ENCODE measurements at regions of chr13 and their contacts with region 1.

Region 1: DNA sequence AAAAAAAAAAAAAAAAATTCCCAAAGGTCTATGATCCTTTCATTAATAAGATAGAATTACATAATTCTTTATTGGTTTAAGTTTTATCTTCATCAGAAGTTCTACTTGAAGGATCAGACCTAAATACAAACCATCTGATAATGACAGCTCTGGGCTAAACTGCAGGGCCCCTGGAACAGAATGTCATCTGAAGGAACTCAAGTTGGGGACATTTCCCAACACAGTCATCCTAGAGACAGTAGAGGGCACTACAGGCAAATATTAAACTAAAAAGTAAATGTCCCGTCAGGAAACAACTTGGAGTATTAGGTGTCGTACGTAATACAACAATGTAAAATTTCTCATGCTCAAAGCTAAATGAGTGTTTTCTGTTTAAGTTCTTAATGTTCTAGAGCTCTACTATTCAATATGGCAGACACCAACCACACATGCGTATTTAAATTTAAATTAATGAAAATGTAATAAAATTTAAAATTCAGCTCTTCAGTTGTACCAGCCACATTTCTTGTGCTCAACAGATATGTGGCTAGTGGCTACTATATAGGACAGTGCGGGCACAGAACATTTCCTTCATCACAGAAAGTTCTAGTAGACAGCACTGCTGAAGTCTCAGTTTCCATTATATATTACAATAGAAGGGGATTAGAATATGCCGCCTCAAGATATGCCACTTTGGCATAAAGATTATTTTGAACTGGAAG is 21.8 kb upstream of the NAXD start:
- DNase-seq: peak; percentile 64
- H3K4me3 Mint-ChIP-seq: no peak overlapping the region
- H3K27ac Mint-ChIP-seq: no peak overlapping the region
- H3K4me1 Mint-ChIP-seq: peaks cover 10% of the 10 kb centered on the region
- H3K27me3 Mint-ChIP-seq: no peaks in the 10 kb centered on the region
- CTCF ChIP-seq: peak; percentile 55

Region 2: GRCh38 chr13:110187641-110188161 is 405.9 kb before region 1 on chr13:
- CTCF ChIA-PET with region 1: no interaction called
- POLR2A ChIA-PET with region 1: no interaction called
- intact Hi-C with region 1: no loop called
- DNase-seq: peak; percentile 70
- H3K4me3 Mint-ChIP-seq: no peak overlapping the region
- H3K27ac Mint-ChIP-seq: no peak overlapping the region
- H3K4me1 Mint-ChIP-seq: no peaks in the 10 kb centered on the region
- H3K27me3 Mint-ChIP-seq: no peaks in the 10 kb centered on the region
- CTCF ChIP-seq: no peak

Region 3: DNA sequence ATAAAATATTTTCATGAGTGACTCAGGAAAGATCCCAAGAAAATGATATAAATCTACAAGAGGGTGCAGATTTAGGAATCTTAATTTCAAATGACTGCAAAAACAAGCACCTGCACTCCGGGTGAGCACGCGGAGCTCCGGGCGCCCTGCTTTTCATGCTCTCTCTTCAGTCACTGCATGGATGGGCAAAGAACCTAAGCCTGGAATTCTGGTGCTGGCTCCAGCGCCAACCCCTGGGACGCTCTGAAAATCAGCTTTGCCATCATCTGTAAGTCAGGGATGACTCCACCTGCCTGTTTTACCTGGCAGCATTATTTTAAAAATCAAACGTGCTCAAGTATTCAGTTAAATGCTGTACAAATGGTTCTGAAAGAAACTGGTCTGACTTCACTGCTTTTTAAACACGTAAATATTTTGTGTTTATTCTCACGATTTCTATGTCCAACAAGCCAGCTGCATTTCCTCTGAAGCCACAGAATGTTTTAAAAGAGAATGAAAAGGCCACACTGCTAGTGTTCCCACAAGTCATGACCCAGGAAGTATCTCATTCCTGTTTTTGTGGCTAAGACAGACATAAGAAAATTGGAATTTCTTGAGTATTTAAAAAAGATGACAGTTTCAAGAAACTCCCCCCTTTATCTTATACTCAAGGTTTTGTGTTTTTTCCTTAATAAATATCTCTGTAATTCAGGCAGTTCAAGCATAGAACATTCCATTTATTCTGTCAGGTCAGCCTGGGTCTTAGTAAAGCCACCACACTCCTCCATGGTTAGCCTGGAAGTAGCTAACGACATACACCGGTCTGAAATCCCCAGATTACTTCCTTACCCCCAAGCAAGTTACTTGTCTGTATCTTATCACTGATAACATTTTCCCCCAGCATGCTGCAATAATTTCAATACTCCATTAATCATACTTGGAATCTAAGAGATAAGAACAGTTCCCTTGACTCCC is 367.7 kb before region 1 on chr13:
- CTCF ChIA-PET with region 1: interaction called, 4 read pairs
- POLR2A ChIA-PET with region 1: no interaction called
- intact Hi-C with region 1: loop called (anchors 10 kb)
- DNase-seq: no peak
- H3K4me3 Mint-ChIP-seq: no peak overlapping the region
- H3K27ac Mint-ChIP-seq: no peak overlapping the region
- H3K4me1 Mint-ChIP-seq: peaks cover 5% of the 10 kb centered on the region
- H3K27me3 Mint-ChIP-seq: no peaks in the 10 kb centered on the region
- CTCF ChIP-seq: no peak

Region 4: DNA sequence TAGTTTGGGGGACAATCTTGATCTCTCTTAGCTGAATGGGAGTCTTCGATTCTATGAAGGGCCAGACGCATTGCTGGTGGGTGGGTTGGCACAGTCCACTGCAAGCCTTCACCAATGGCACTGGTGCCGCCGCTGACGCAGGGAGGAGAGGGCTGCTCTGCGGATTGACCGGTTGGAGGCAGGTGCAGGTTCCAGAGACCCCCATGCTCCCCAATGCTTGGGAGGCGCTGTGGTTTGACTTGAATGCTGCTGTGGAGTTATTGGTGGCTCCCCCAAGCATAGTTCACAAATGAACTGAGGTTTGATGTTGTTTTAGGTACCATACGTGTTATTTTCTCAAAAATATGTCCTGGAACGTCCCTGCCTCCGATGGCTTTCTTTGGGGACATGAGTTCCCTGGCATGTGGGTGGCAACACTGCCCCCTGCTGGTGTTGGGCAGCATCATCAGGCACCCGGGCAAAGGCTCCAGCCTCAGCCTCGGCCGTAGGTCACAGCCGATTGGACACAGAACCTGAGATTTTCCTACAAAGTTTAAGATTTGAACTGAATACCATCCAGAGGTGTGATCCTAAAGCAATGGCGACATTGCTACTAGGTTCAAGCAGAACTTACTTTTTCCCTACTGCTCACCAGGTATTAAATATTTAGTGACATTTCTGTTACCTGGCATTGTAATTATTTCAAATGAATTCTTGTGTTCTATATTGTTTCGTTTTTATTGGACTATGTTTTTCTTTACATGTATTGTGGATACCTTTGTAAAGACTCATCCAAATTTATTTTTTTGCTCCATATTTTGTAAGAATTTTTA is 225.8 kb after region 1 on chr13:
- CTCF ChIA-PET with region 1: interaction called, 12 read pairs
- POLR2A ChIA-PET with region 1: no interaction called
- intact Hi-C with region 1: loop called (anchors 1 kb)
- DNase-seq: peak; percentile 78
- H3K4me3 Mint-ChIP-seq: no peak overlapping the region
- H3K27ac Mint-ChIP-seq: no peak overlapping the region
- H3K4me1 Mint-ChIP-seq: peaks cover 5% of the 10 kb centered on the region
- H3K27me3 Mint-ChIP-seq: no peaks in the 10 kb centered on the region
- CTCF ChIP-seq: peak; percentile 92

Region 5: GRCh38 chr13:111031531-111031961 is 438.0 kb after region 1 on chr13:
- CTCF ChIA-PET with region 1: interaction called, 3 read pairs
- POLR2A ChIA-PET with region 1: no interaction called
- intact Hi-C with region 1: loop called (anchors 10 kb)
- DNase-seq: peak; percentile 43
- H3K4me3 Mint-ChIP-seq: no peak overlapping the region
- H3K27ac Mint-ChIP-seq: no peak overlapping the region
- H3K4me1 Mint-ChIP-seq: peaks cover 12% of the 10 kb centered on the region
- H3K27me3 Mint-ChIP-seq: no peaks in the 10 kb centered on the region
- CTCF ChIP-seq: no peak

Measured in MCF 10A (cell line).